ENCODE measurements at regions of chr19 and their contacts with region 1.

Region 1: GRCh38 chr19:17859533-17860330 is at the start of gene RPL18A:
- DNase-seq: peak; percentile 99
- ATAC-seq: peak; percentile 96 to 98 (median 97)
- H3K4me3 ChIP-seq: peak within 1 kb of the TSS; percentile 68 to 100 (median 88)
- H3K27ac ChIP-seq: peak within 1 kb of the TSS; percentile 41 to 96 (median 88)
- H3K4me1 ChIP-seq: peaks cover 5 to 40% (median 17%) of the 10 kb centered on the region in 12 donors
- H3K27me3 ChIP-seq: no peaks in the 10 kb centered on the region
- CTCF ChIP-seq: peak; percentile 57 to 90 (median 84)
- POLR2A ChIP-seq: peak; percentile 69 to 97
- total RNA-seq, gene RPL18A: 566 to 1,124 (median 752) TPM

Region 2: GRCh38 chr19:17448131-17448967 is 411.4 kb before region 1 on chr19 and contains the start of gene TMEM221:
- intact Hi-C with region 1: loop called in 4 of 10 experiments (anchors 5 to 10 kb)
- DNase-seq: peak; percentile 35 to 77 (median 53)
- ATAC-seq: peak in 3 of 4 donors; percentile 66 to 80 (median 66)
- H3K4me3 ChIP-seq: peak within 1 kb of the TSS; percentile 22 to 61 (median 53)
- H3K27ac ChIP-seq: peak within 1 kb of the TSS in 1 of 12 donors; percentile 25
- H3K4me1 ChIP-seq: peaks cover 0 to 13% (median 7%) of the 10 kb centered on the region in 12 donors
- H3K27me3 ChIP-seq: peaks cover 0 to 14% (median 0%) of the 10 kb centered on the region in 9 donors
- CTCF ChIP-seq: peak; percentile 29 to 74 (median 58)
- POLR2A ChIP-seq: no peak
- total RNA-seq, gene TMEM221: 0.52 TPM in 1 of 9 donors, not detected in the others

Region 3: GRCh38 chr19:17718947-17719711 is 140.6 kb before region 1 on chr19 and contains the start of gene MAP1S:
- intact Hi-C with region 1: loop called in 1 of 10 experiments (anchors 5 kb)
- DNase-seq: peak; percentile 59 to 83 (median 67)
- ATAC-seq: peak; percentile 33 to 71 (median 58)
- H3K4me3 ChIP-seq: peak within 1 kb of the TSS; percentile 83 to 99 (median 94)
- H3K27ac ChIP-seq: peak within 1 kb of the TSS in 11 of 12 donors; percentile 60 to 80 (median 75)
- H3K4me1 ChIP-seq: peaks cover 0 to 57% (median 43%) of the 10 kb centered on the region in 12 donors
- H3K27me3 ChIP-seq: no peaks in the 10 kb centered on the region
- CTCF ChIP-seq: no peak
- POLR2A ChIP-seq: peak in 1 of 2 donors; percentile 60
- total RNA-seq, gene MAP1S: 19.5 to 47.9 (median 24.1) TPM

Region 4: DNA sequence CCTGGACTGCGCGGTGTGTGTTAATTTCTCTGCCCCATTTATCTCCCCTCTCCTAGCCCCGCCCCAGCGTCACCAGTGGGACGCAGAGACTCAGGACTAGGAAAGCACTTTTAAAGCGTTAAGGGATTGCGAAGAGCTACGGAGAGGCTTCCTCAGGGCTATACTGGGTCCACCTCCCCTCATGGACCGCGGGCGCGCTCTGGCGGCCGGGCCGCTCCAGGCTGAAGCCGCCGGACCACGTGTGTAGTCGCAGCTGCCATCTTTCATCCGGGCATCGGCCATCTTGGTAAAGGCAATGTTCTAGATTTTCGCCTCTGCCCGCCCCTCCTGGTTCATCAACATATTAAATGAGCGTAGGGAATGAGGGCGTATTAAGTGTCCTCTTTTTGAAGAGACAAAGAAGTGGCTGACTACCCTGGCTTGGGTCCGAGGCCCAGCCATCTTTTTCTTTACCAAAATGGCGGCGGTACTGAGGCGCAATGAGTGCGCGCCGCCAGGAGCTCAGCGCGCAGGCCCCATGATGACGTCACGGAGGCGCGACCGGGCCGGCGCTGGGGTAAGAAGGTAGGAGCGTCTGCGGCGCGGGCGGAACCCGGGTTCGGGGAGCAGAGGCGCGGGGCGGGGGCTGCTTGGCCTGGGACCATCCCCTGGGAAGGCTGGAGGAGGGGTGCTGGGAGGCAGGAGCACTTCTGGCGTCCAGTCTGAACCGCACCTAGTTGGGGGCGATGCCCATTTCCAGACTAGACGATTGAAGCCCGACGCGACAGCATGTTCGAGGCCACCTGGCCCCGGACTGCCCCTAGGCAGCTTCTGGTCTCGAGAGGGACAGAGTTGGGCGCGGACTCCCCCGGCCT is 73.0 kb after region 1 on chr19 and contains the start of gene CCDC124:
- intact Hi-C with region 1: loop called (anchors 1 to 5 kb)
- DNase-seq: peak; percentile 91 to 96 (median 92)
- ATAC-seq: peak; percentile 95 to 99 (median 96)
- H3K4me3 ChIP-seq: peak within 1 kb of the TSS; percentile 65 to 99 (median 88)
- H3K27ac ChIP-seq: peak within 1 kb of the TSS in 11 of 12 donors; percentile 65 to 92 (median 87)
- H3K4me1 ChIP-seq: peaks cover 0 to 22% (median 14%) of the 10 kb centered on the region in 12 donors
- H3K27me3 ChIP-seq: no peaks in the 10 kb centered on the region
- CTCF ChIP-seq: peak; percentile 68 to 90 (median 78)
- POLR2A ChIP-seq: peak in 1 of 2 donors; percentile 84
- total RNA-seq, gene CCDC124: 45.4 to 115 (median 66.1) TPM

Region 5: GRCh38 chr19:18021121-18021755 is 161.5 kb after region 1 on chr19:
- intact Hi-C with region 1: no loop called
- DNase-seq: peak; percentile 89 to 95 (median 92)
- ATAC-seq: peak; percentile 12 to 66 (median 50)
- H3K4me3 ChIP-seq: peak overlapping the region in 3 of 12 donors; percentile 18 to 38 (median 33)
- H3K27ac ChIP-seq: peak overlapping the region; percentile 86 to 98 (median 94)
- H3K4me1 ChIP-seq: peaks cover 32 to 84% (median 68%) of the 10 kb centered on the region in 12 donors
- H3K27me3 ChIP-seq: no peaks in the 10 kb centered on the region
- CTCF ChIP-seq: no peak
- POLR2A ChIP-seq: peak in 1 of 2 donors; percentile 16

Measured in heart left ventricle (tissue), 16 donors.